Natural killer cell (primary cell): ENCODE measurements at regions of chr20 and their contacts with region 1.

Region 1: DNA sequence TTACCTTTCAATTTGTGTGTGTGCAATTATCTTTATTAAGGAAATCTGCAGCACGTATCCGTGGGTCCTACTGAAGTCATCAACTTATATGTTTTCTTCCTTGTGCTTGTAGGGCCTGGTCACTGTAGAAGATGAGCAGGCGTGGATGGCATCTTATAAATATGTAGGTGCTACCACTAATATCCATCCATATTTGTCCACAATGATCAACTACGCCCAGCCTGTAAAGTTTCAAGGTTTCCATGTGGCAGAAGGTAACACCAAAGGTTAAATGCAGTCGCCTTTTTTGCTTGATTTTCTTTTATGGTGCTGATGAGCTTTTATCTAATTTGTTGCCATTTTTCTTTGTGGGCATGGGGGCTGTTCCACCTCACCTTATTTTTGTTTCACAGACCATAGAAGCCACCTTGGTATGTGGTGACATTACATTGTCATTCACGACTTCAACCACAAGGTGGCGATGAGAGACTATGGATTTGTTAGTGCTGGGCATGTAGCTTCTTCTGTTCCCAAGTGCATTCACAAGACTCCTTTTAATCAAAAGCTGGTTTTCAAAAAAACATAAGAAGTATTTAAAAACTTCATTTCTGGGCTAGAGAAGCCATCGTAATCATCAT is 106.5 kb upstream of the LAMP5 start:
- DNase-seq: peak; percentile 16 to 55
- ATAC-seq: peak in 2 of 3 donors; percentile 58 to 74
- H3K4me3 ChIP-seq: no peak overlapping the region
- H3K4me3 Mint-ChIP-seq: no peak overlapping the region
- H3K27ac ChIP-seq: no peak overlapping the region
- H3K27ac Mint-ChIP-seq: no peak overlapping the region
- H3K4me1 ChIP-seq: no peaks in the 10 kb centered on the region
- H3K4me1 Mint-ChIP-seq: no peaks in the 10 kb centered on the region
- H3K27me3 ChIP-seq: no peaks in the 10 kb centered on the region
- H3K27me3 Mint-ChIP-seq: no peaks in the 10 kb centered on the region
- CTCF ChIP-seq: peak; percentile 71

Region 2: GRCh38 chr20:9609887-9610502 is 202.1 kb after region 1 on chr20:
- intact Hi-C with region 1: loop called (anchors 2 kb)
- DNase-seq: peak in 1 of 2 donors; percentile 54
- ATAC-seq: peak in 2 of 3 donors; percentile 39 to 53
- H3K4me3 ChIP-seq: no peak overlapping the region
- H3K4me3 Mint-ChIP-seq: no peak overlapping the region
- H3K27ac ChIP-seq: no peak overlapping the region
- H3K27ac Mint-ChIP-seq: no peak overlapping the region
- H3K4me1 ChIP-seq: no peaks in the 10 kb centered on the region
- H3K4me1 Mint-ChIP-seq: no peaks in the 10 kb centered on the region
- H3K27me3 ChIP-seq: no peaks in the 10 kb centered on the region
- H3K27me3 Mint-ChIP-seq: peaks cover 0 to 16% of the 10 kb centered on the region in 2 donors
- CTCF ChIP-seq: peak; percentile 60

Region 3: DNA sequence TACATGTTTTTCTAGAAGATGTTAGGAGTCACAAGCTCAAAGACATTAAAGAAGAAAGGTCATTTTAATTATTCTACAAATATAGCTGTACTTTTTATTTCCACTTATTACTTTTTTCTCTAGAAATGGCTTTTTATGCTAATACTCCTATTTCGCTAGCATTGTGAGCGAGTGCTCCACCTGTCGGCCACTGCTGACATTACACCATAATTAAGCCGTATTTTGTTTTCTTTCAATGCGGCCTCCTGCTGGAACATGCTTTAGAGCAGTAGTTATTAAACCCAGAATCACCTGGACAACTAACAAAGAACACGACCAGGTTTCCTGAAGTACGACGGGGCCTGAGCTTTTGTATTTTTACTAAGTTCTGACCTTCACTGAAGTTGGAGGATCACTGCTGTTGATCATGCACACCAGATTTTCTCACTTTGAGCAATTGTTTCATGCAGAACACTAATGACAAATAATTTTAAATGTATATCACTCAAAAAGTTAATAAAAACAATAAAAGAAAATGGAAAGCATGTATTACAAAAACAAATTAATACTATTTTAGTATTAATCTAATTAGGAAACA is 505.0 kb after region 1 on chr20:
- intact Hi-C with region 1: loop called (anchors 10 kb)
- DNase-seq: peak; percentile 18 to 43
- ATAC-seq: peak in 2 of 3 donors; percentile 31 to 40
- H3K4me3 ChIP-seq: no peak overlapping the region
- H3K4me3 Mint-ChIP-seq: no peak overlapping the region
- H3K27ac ChIP-seq: no peak overlapping the region
- H3K27ac Mint-ChIP-seq: no peak overlapping the region
- H3K4me1 ChIP-seq: no peaks in the 10 kb centered on the region
- H3K4me1 Mint-ChIP-seq: no peaks in the 10 kb centered on the region
- H3K27me3 ChIP-seq: no peaks in the 10 kb centered on the region
- H3K27me3 Mint-ChIP-seq: peaks cover 7 to 27% of the 10 kb centered on the region in 2 donors
- CTCF ChIP-seq: peak; percentile 84

Region 4: DNA sequence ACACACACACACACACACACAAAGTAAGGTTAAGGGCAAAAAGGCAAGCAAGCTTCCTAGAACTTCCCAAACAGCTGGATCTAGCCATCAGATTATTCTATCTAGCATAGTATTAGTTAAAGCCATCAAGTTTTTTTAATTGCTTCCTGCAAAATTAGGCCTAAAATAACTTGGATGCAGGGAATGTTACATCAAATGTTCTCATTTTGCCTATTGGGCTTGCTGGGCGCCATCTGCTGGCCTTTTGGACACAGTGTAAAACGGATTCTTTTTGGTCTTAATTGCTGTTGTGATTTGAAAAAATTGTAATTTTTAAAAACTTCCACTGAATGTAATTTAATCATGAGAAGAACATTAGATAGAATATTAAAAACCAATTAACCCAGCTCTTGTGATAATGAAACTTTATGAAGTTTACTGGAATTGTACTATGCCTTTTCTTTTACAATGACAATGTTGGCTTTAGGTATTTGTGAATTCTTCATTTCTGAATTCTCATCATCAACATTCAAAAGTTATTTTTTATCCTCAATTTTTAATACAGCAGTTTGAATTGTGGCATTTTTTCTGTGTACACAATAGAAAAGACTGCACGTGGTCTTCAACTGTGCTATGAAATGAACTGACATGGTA is 1019.3 kb after region 1 on chr20:
- intact Hi-C with region 1: loop called (anchors 5 kb)
- DNase-seq: peak in 1 of 2 donors; percentile 70
- ATAC-seq: peak; percentile 50 to 69 (median 54)
- H3K4me3 ChIP-seq: no peak overlapping the region
- H3K4me3 Mint-ChIP-seq: no peak overlapping the region
- H3K27ac ChIP-seq: no peak overlapping the region
- H3K27ac Mint-ChIP-seq: no peak overlapping the region
- H3K4me1 ChIP-seq: no peaks in the 10 kb centered on the region
- H3K4me1 Mint-ChIP-seq: peaks cover 32 to 52% of the 10 kb centered on the region in 2 donors
- H3K27me3 ChIP-seq: no peaks in the 10 kb centered on the region
- H3K27me3 Mint-ChIP-seq: no peaks in the 10 kb centered on the region
- CTCF ChIP-seq: peak; percentile 87